Dendritic cell treated with granulocyte-macrophage colony-stimulating factor and Interleukin-4, amounts not matched to agents 40 ng/mL and 50 ng/mL, for 4 days (primary cell): ENCODE measurements at regions of chr17 and their contacts with region 1.

Region 1: DNA sequence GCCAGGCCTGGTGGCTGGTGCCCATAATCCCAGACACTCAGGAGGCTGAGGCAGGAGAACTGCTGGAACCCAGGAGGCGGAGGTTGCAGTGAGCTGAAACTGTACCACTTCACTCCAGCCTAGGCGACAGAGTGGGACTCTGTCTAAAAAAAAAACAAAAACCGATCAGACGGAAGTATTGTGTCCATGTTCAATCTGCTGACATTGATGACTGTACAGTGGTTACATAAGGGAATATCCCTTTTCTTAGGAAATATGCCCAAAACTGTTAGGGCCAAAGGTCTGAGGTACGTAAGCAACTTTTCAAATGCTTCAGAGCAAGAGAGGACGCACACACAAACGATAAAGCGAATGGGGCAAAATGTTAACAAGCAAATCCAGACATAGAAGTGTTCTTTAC is 69.8 kb upstream of the DNAH17 start:
- H3K4me3 Mint-ChIP-seq: peak overlapping the region; percentile 14
- H3K27ac Mint-ChIP-seq: peak overlapping the region; percentile 93
- H3K4me1 Mint-ChIP-seq: peaks cover 69% of the 10 kb centered on the region
- H3K27me3 Mint-ChIP-seq: no peaks in the 10 kb centered on the region

Region 2: DNA sequence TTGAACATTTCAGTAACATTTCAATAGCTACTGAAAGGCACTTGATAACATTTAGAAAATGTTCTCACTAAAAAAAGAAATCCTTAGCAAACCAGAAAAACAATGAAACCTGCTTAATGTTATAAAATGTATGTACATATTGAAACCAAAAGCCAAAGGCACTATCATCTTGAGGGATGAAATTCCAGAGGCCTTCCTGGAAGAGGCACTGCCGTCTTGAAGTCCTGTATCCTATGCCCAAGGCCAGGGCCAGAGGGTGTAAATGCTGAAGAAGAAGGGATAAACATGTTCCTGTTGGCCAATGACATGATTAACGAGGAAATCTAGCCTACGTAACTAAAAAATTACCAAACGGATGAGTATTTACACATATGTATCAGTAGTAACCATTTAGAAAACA is 12.9 kb before region 1 on chr17:
- intact Hi-C with region 1: no loop called
- H3K4me3 Mint-ChIP-seq: no peak overlapping the region
- H3K27ac Mint-ChIP-seq: no peak overlapping the region
- H3K4me1 Mint-ChIP-seq: peaks cover 30% of the 10 kb centered on the region
- H3K27me3 Mint-ChIP-seq: peaks cover 6% of the 10 kb centered on the region

Region 3: GRCh38 chr17:78665952-78666920 is 19.2 kb after region 1 on chr17:
- intact Hi-C with region 1: loop called (anchors 1 kb)
- H3K4me3 Mint-ChIP-seq: no peak overlapping the region
- H3K27ac Mint-ChIP-seq: peak overlapping the region; percentile 94
- H3K4me1 Mint-ChIP-seq: peaks cover 49% of the 10 kb centered on the region
- H3K27me3 Mint-ChIP-seq: peaks cover 9% of the 10 kb centered on the region

Region 4: GRCh38 chr17:78697554-78698343 is 50.7 kb after region 1 on chr17:
- intact Hi-C with region 1: no loop called
- H3K4me3 Mint-ChIP-seq: no peak overlapping the region
- H3K27ac Mint-ChIP-seq: peak overlapping the region; percentile 26
- H3K4me1 Mint-ChIP-seq: peaks cover 21% of the 10 kb centered on the region
- H3K27me3 Mint-ChIP-seq: no peaks in the 10 kb centered on the region